Pancreas (tissue), 10 donors: ENCODE measurements at regions of chr1 and their contacts with region 1.

Region 1: GRCh38 chr1:78145105-78145580 is 99.4 kb downstream of the GIPC2 start:
- DNase-seq: peak in 4 of 6 donors; percentile 26 to 53 (median 40)
- ATAC-seq: peak; percentile 80 to 93 (median 92)
- H3K4me3 ChIP-seq: no peak overlapping the region
- H3K27ac ChIP-seq: no peak overlapping the region
- H3K4me1 ChIP-seq: peaks cover 0 to 12% (median 6%) of the 10 kb centered on the region in 3 donors
- H3K27me3 ChIP-seq: no peaks in the 10 kb centered on the region
- CTCF ChIP-seq: peak; percentile 26 to 78 (median 73)

Region 2: DNA sequence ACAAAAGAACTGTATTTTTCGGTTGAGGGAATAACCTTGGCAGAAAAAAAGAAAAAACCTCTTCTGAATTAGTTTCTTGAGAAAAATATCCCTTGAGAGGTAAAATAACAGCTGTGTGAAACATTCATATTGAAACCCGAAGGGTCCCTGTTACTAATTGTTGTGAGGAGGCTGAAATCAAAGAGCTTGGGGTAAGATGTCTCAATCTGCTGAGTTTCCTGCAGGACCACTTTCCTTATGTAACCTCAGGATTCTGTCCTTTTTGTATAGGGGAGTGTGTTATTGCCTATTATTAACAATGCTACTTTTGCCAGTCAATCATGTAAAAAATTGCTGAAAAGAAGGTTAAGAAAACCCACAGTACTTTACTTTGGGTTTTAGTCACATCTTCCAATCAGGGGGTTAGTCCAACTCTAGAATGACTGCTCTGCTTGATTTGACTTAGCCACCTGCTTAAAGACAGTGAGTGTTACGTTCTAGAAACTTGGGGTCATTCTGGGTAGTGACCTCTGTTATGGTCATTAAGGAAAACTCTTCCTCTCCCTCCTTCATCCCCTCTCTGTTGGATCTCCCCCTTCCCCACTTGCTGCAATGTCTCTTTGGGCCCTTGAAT is 39.4 kb after region 1 on chr1:
- intact Hi-C with region 1: no loop called
- DNase-seq: no peak
- ATAC-seq: no peak
- H3K4me3 ChIP-seq: no peak overlapping the region
- H3K27ac ChIP-seq: no peak overlapping the region
- H3K4me1 ChIP-seq: no peaks in the 10 kb centered on the region
- H3K27me3 ChIP-seq: no peaks in the 10 kb centered on the region
- CTCF ChIP-seq: no peak

Region 3: DNA sequence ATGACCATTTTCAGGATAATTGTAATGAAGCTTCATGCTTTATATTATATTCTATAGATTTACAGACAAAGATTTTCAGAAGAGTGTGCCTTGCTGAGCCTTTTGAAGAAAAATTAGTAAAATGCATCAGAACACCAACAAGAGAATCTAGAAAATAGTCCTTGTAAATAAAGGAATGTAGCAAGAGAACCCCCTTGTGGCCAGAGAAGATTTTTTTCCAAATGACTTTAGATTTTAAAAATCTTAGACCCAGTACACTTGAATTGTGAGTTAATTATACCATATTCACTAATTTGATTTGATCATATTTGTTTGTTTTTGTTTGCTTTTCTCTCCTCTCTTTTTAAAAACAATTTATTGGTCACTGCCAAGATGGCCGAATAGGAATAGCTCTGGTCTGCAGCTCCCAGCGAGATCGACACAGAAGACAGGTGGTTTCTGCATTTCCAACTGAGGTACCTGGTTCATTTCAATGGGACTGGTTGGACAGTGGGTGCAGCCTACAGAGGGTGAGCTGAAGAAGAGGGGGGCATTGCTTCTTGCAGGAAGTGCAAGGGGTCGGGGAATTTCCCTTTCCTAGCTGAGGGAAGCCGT is 462.3 kb after region 1 on chr1:
- intact Hi-C with region 1: loop called in 1 of 3 experiments (anchors 10 kb)
- DNase-seq: no peak
- ATAC-seq: peak; percentile 48 to 72 (median 68)
- H3K4me3 ChIP-seq: no peak overlapping the region
- H3K27ac ChIP-seq: no peak overlapping the region
- H3K4me1 ChIP-seq: no peaks in the 10 kb centered on the region
- H3K27me3 ChIP-seq: no peaks in the 10 kb centered on the region
- CTCF ChIP-seq: peak; percentile 33 to 63 (median 56)

Region 4: GRCh38 chr1:78688701-78689100 is 543.6 kb after region 1 on chr1:
- intact Hi-C with region 1: loop called in 1 of 3 experiments (anchors 10 kb)
- DNase-seq: no peak
- ATAC-seq: no peak
- H3K4me3 ChIP-seq: no peak overlapping the region
- H3K27ac ChIP-seq: no peak overlapping the region
- H3K4me1 ChIP-seq: no peaks in the 10 kb centered on the region
- H3K27me3 ChIP-seq: no peaks in the 10 kb centered on the region
- CTCF ChIP-seq: no peak